ENCODE measurements at regions of chr3 and their contacts with region 1.

Region 1: DNA sequence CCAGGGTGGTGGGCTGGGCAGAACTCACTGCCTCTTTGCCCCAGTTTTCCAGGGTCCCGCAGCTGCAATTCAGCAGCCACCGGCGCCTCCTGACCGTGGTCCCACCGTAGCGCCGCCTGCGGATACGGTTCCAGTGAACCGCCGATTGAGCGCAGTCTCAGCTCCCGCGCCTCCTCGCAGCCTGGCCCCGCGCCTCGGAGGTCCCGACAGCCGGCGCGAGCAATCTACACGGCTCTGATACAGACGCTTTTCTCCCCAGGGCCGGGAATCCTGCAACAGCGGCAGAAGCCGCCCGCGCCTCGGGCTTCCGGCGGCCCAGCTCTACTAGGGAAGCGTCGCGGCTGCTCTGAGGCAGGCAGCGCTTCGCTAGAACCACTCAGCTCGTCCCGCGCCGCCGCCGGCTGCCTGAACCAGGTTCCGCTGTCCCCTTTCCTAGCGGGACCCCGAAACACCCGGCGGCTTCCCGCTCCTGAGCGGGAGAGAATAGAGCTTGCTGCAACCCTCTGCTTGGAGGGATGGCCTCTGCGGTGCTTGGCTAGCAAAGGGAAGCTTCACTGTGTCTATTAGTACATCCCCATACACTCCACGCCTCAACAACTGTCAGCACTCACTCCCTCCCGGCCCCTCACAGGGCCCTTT is 3.1 kb downstream of the FOXL2NB start:
- DNase-seq: peak; percentile 10

Region 2: DNA sequence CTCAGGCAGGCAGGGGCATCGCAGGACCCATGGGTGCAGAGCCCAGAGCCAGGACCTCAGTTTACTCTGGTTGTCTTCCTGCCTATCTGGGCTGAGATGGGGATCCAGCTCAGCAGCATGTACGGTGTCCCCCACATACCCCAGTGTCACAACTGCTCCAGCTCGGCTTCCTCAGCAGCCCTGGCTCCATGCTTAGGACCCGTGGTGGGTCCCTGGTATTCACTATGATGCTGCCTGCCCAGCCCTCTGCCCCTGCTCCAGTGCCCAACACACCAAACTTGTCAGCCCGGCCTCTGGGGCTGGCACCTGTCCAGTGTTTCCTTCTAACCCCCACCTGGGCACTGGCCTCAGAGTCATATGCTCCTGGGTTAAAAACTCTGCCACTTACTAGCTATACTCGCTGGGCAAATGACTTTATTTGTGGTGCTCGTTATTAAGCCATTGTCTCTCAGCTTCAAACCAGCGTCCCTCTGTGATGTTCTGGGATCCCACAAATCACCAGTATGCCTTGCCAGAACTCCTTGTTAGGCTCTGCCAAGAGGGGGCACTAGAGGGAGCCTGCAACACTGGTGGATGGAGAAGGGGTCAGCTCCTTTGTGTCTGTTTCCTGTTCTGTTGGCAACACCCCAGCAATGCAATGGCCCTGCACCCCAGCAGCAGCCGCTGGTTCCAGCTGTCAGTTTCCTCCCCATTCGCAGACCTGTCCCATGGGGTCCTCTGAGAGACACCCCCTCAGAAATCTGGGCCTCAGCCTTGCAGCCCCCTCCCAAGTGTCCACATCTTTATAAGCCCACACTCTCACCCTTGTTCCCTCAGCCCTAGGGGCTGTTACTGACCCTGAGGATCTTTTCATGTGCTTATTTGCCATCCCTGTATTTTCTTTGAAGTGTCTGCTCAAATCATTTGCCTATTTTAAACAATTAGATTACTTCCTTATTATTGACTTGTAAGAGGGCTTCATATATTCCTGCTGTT is 369.6 kb after region 1 on chr3:
- in situ Hi-C with region 1: loop called (anchors 25 kb)
- DNase-seq: no peak

Measured in G401 (cell line).